Activated naive CD4-positive, alpha-beta T cell treated with anti-CD3 and anti-CD28 coated beads, Interleukin-2, amount 10 ng/mL, durations not matched to agents 7 days and 5 days (primary cell): ENCODE measurements at regions of chr3 and their contacts with region 1.

Region 1: GRCh38 chr3:98022978-98023820 is 11.9 kb downstream of the GABRR3 start:
- DNase-seq: peak; percentile 94
- H3K4me3 Mint-ChIP-seq: no peak overlapping the region
- H3K27ac Mint-ChIP-seq: peak overlapping the region; percentile 9
- H3K4me1 Mint-ChIP-seq: peaks cover 18% of the 10 kb centered on the region
- H3K27me3 Mint-ChIP-seq: peaks cover 5% of the 10 kb centered on the region

Region 2: GRCh38 chr3:97821810-97822775 is 201.1 kb before region 1 on chr3 and contains the start of gene CRYBG3:
- CTCF ChIA-PET with region 1: interaction called, 22 read pairs
- DNase-seq: peak; percentile 88
- H3K4me3 Mint-ChIP-seq: peak within 1 kb of the TSS; percentile 99
- H3K27ac Mint-ChIP-seq: peak within 1 kb of the TSS; percentile 85
- H3K4me1 Mint-ChIP-seq: peaks cover 27% of the 10 kb centered on the region
- H3K27me3 Mint-ChIP-seq: peaks cover 40% of the 10 kb centered on the region

Region 3: DNA sequence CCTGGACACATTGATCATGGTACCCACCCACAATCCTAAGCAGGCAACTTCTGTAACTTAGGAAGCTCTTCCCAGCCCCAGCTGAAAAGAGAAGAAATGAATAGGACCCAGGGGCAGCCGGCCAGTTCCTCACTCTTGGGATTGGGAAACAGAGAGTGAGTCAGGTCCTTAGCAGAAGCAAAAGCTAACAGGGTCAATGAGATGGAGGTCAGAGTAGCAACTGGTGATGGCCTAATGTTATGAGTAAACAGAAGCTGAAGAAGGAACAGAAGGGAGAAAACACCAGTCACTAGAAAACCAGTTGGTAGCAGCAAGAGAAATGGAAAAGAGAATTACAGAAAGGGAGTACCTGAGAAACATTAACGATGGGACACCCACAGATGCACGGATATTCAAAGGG is 70.9 kb before region 1 on chr3:
- CTCF ChIA-PET with region 1: interaction called, 40 read pairs
- DNase-seq: no peak
- H3K4me3 Mint-ChIP-seq: no peak overlapping the region
- H3K27ac Mint-ChIP-seq: peak overlapping the region; percentile 20
- H3K4me1 Mint-ChIP-seq: peaks cover 5% of the 10 kb centered on the region
- H3K27me3 Mint-ChIP-seq: no peaks in the 10 kb centered on the region

Region 4: DNA sequence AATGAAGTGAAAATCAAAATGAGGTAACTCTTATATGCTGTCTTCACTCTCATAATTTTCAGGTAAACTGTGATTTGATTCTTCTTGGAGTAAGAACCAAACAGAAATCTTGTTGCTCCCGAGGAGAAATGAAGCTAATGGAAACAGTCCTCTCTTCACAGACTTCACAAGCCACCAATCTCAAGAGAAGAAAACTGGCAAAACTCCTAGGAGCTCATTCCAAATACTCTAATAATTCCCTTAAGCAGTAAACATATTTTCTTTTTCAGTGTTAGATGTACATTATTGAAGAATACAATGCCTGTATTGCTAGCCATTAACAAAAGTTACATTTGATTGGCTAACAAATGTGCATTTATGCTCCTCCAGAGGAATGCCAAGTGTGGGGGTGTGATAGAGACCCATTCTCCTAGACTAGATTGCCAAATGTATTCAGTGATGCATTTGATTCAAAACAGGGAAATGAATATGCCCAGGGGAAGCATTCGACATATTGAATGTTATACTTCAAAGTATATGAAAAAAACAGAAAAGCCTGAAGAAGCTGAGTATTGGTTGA is 39.2 kb before region 1 on chr3:
- CTCF ChIA-PET with region 1: interaction called, 17 read pairs
- DNase-seq: no peak
- H3K4me3 Mint-ChIP-seq: no peak overlapping the region
- H3K27ac Mint-ChIP-seq: no peak overlapping the region
- H3K4me1 Mint-ChIP-seq: peaks cover 25% of the 10 kb centered on the region
- H3K27me3 Mint-ChIP-seq: peaks cover 4% of the 10 kb centered on the region

Region 5: DNA sequence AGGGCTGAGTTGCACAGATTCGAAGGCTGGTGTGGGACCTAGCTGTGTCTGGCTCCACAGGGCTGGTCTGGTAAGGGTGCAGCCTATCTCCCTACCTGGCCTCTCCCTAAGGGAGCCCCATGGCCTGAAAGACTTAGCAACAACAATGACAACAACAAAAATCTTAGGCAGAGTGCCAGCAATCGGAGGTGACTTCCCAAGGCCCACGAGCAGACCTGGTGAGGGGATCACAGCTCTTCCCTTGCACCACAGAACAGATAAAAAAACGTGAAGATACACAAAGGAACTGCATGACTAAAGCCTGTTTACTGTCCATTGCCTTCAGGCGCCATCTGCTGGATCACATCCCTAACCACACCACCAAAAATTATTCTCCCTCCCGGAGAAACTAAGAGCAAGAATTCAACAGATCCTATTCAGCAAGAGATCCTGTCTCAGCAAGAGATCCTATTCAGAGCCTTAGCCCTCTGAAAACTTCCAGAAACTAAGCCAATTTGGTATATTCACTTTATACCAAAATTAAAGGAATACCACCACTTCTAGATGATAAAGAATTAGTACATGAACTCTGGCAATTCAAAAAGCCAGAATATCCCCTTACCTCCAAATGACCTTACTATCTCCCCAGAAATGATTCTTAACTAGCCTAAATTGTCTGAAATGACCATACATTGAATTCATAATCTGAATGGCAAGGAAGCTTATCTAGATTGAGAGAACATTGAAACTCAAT is 306.4 kb after region 1 on chr3:
- CTCF ChIA-PET with region 1: interaction called, 11 read pairs
- DNase-seq: peak; percentile 61
- H3K4me3 Mint-ChIP-seq: no peak overlapping the region
- H3K27ac Mint-ChIP-seq: no peak overlapping the region
- H3K4me1 Mint-ChIP-seq: peaks cover 24% of the 10 kb centered on the region
- H3K27me3 Mint-ChIP-seq: peaks cover 26% of the 10 kb centered on the region